Motor neuron (in vitro differentiated cells): ENCODE measurements at regions of chr17 and their contacts with region 1.

Region 1: DNA sequence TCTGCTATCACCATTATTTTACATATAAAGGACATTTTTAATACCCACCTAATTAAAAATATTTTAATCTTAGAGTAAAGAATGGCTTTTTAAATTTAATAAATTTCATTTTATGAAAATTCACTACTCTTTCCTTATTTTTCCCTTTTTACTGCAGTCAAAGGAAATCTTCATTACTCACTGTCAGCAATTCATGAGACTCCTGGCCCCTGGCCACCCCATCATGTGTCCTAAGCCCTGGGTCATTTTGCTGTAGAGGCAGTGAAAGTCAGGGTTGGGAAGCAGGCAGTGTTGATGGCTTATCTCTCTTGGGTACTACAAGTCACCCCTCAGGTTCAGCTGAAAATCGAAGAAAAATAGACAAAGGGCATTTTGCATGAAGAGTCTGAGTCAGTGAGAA is 468.6 kb upstream of the CCL2 start:
- ATAC-seq: peak in 1 of 8 experiments; percentile 26
- H3K4me3 ChIP-seq: no peak overlapping the region
- H3K27ac ChIP-seq: no peak overlapping the region
- H3K4me1 ChIP-seq: no peaks in the 10 kb centered on the region

Region 2: GRCh38 chr17:34163646-34164045 is 377.2 kb after region 1 on chr17:
- in situ Hi-C with region 1: loop called in 6 of 9 experiments (anchors 10 to 25 kb)
- ATAC-seq: peak in 6 of 8 experiments; percentile 8 to 61 (median 37)
- H3K4me3 ChIP-seq: no peak overlapping the region
- H3K27ac ChIP-seq: no peak overlapping the region
- H3K4me1 ChIP-seq: peaks cover 0 to 3% of the 10 kb centered on the region in 2 donors